ENCODE measurements at regions of chr10 and their contacts with region 1.

Region 1: GRCh38 chr10:5818894-5819293 is 5.7 kb upstream of the GDI2 start:
- DNase-seq: no peak
- H3K4me3 ChIP-seq: no peak overlapping the region
- H3K27ac ChIP-seq: no peak overlapping the region
- H3K4me1 ChIP-seq: peaks cover 7% of the 10 kb centered on the region
- H3K27me3 ChIP-seq: no peaks in the 10 kb centered on the region
- CTCF ChIP-seq: no peak

Region 2: GRCh38 chr10:5862360-5862961 is 43.6 kb after region 1 on chr10:
- CTCF ChIA-PET with region 1: no interaction called
- dilution Hi-C with region 1: loop called (anchors 5 kb)
- in situ Hi-C with region 1: no loop called
- intact Hi-C with region 1: no loop called
- DNase-seq: no peak
- H3K4me3 ChIP-seq: no peak overlapping the region
- H3K27ac ChIP-seq: no peak overlapping the region
- H3K4me1 ChIP-seq: peaks cover 5% of the 10 kb centered on the region
- H3K27me3 ChIP-seq: peaks cover 2% of the 10 kb centered on the region
- CTCF ChIP-seq: no peak

Region 3: GRCh38 chr10:6088721-6089390 is 270.0 kb after region 1 on chr10 and contains the start of gene RBM17:
- CTCF ChIA-PET with region 1: no interaction called
- dilution Hi-C with region 1: no loop called
- in situ Hi-C with region 1: no loop called
- intact Hi-C with region 1: no loop called
- DNase-seq: peak; percentile 89
- H3K4me3 ChIP-seq: peak within 1 kb of the TSS; percentile 74 to 77 (median 76)
- H3K27ac ChIP-seq: peak within 1 kb of the TSS; percentile 82
- H3K4me1 ChIP-seq: peaks cover 15% of the 10 kb centered on the region
- H3K27me3 ChIP-seq: peaks cover 2% of the 10 kb centered on the region
- CTCF ChIP-seq: peak; percentile 100
- total RNA-seq, gene RBM17: 31.5 to 120 TPM

Measured in mammary epithelial cell (primary cell).